ENCODE measurements at regions of chr5 and their contacts with region 1.

Region 1: DNA sequence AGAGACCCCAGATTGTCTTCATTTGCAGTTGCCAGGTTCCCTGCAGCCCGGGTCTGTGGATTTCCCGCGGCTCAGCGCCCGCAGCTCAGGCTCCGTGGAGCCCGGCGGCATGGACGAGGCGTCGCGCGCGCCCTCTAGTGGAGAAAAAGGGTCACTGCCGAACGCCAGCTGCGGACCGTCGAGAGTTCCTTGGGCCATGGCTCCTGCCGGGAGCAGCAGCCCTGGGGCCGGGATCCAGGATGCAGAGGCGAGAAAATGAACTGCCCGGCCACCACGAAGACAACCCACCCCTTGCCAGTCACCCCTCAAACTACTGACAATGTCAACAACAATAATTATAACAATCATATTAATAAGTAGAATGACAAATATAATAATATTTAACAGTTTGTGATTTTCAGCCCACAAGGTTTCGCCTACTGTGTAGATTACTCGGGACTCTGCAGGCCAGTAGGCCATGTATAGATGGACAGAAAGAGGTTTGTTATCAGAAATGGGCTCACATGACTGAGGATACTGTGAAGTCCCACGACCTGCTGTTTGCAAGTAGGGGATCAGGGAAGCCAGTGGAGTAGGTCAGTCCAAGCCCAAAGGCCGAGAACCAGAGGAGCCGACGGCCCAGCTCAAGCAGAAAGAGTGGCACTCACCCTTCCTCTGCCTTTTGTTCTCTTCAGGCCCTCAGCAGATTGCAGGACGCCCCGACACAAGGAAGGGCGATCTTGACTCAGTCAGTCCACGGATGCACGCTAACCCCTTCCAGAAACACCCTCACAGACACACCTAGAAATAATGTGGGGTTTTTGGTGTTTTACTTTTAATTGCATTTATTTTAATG is 43.1 kb downstream of the BOD1 start:
- DNase-seq: peak; percentile 83
- CTCF ChIP-seq: peak; percentile 99

Region 2: DNA sequence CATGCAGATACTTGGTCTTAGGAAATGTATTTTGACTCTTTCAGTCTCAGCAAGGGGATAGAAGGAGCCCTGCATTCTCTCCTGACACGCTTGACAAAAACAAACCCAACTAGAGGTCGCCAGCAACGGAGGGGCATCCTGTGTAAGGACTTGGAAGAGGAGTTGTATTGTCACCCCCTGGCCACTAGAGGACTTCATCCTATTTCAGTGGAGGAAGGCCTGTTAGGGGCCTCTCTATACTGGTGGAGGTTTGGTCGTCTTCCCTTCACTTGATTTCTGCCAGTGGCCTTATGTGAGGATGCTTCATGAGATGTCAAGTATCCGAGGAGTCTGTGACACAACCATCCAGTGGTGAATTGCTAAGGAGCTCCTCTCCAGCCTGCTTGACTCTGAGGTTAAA is 122.3 kb before region 1 on chr5:
- CTCF ChIA-PET with region 1: interaction called, 12 read pairs
- POLR2A ChIA-PET with region 1: no interaction called
- DNase-seq: peak; percentile 36
- CTCF ChIP-seq: peak; percentile 52

Region 3: DNA sequence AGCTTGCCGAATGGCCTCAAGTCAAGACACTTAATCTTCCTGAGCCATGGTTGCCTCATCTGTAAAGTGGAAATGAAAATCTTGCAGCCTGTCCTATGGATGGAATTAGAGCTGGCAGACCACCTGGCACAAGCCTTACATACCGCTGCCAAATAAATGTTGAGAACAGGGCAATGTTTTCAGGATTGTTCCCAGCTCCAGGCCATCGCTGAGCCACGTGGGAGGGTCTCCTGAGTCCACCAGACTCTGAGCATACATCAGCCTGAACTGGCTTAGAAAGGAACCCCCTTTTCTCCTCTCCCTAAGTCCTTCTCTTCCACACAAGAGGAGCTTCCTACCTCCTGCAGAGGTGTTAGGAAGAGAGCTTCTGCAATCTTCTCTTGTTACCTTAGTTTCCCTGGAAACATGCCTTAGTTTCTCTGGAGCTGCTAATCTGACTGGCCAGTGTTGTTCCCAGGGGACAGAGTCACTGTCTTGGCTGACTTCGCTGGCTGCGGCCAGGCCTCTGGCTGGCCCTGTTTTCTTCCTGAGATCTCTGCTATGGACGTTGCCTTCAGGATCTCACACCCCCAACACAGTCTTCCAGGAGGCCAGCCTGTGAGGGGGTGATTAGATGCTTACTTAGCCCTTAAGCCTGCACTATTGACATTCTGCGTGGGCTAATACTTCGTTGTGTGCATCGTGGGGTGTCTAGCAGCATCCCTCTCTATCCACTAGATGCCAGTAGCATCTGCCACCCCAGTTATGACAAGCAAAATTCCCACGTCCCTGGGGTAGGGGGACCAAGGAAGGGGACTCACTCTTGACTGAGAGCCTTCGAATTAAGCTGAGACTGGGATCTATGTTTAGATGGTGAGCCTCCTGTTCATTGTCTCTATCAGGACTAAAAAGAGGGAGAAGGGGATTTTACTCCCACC is 19.0 kb before region 1 on chr5:
- CTCF ChIA-PET with region 1: interaction called, 14 read pairs
- POLR2A ChIA-PET with region 1: no interaction called
- DNase-seq: no peak
- CTCF ChIP-seq: no peak

Region 4: GRCh38 chr5:173563252-173563651 is 10.1 kb before region 1 on chr5:
- CTCF ChIA-PET with region 1: interaction called, 25 read pairs
- POLR2A ChIA-PET with region 1: no interaction called
- DNase-seq: no peak
- CTCF ChIP-seq: no peak

Region 5: GRCh38 chr5:173592050-173592669 is 18.8 kb after region 1 on chr5:
- CTCF ChIA-PET with region 1: interaction called, 11 read pairs
- POLR2A ChIA-PET with region 1: no interaction called
- DNase-seq: no peak
- CTCF ChIP-seq: no peak